Activated CD4-positive, alpha-beta memory T cell treated with anti-CD3 and anti-CD28 coated beads for 36 hours (primary cell): ENCODE measurements at regions of chr3 and their contacts with region 1.

Region 1: DNA sequence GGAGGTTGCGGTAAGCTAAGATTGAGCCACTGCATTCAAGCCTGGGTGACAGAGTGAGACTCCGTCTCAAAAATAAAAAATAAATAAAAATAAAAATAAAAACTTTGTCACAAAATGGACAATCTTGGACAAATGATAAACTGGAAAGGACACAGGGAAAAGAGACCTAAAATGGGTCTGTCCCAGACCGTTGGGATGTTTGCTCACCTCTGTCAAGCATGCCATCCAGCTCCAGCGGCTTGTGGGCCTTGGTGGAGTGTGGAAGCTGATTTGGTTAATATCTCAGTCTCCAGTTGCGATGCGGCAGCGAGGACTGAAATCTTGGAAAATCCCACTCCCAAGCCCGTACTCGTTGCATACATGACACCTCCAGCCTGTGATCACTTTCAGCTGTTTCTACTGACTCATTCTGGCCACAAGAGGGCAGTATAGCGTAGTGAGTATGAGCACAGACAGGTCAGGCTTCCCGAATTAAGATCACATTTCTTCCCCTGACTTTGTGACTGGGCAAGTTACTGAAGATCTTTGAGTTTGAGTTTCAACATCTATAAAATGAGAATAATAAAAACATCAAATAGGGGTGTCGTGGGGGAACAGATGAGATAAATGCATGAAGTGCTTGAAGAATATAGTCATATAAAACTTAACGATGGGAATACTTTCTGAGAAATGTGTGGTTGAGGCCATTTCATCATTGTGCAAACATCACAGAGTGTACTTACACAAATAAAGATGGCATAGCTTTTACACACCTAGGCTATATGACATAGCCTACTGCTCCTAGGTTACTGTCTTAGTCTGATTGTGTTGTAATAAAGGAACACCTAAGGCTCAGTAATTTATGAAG is 19.6 kb upstream of the MOBP start:
- DNase-seq: peak; percentile 59
- H3K4me3 Mint-ChIP-seq: no peak overlapping the region
- H3K27ac Mint-ChIP-seq: no peak overlapping the region
- H3K4me1 Mint-ChIP-seq: peaks cover 4% of the 10 kb centered on the region
- H3K27me3 Mint-ChIP-seq: peaks cover 2% of the 10 kb centered on the region

Region 2: GRCh38 chr3:39433642-39434041 is 14.2 kb before region 1 on chr3:
- CTCF ChIA-PET with region 1: interaction called, 10 read pairs
- POLR2A ChIA-PET with region 1: interaction called, 3 read pairs
- intact Hi-C with region 1: no loop called
- DNase-seq: no peak
- H3K4me3 Mint-ChIP-seq: no peak overlapping the region
- H3K27ac Mint-ChIP-seq: no peak overlapping the region
- H3K4me1 Mint-ChIP-seq: no peaks in the 10 kb centered on the region
- H3K27me3 Mint-ChIP-seq: peaks cover 6% of the 10 kb centered on the region

Region 3: DNA sequence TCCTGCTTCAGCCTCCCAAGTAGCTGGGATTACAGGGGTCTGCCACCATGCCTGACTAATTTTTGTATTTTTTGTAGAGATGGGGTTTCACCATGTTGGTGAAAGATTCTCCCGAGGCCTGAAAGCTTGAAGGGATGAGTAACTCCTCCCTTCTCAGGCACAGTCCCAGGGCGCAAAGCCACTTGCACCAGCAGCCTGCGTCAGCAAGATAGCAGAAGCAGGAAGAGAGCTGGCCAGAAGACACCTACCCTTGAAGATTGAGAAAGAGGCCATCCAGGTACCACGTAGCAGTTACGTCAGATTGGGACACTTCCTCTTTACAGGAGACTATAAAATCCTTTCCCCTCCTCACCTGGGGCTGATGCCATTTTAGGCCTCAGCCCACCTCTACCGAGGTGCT is 11.2 kb after region 1 on chr3:
- CTCF ChIA-PET with region 1: interaction called, 11 read pairs
- POLR2A ChIA-PET with region 1: no interaction called
- intact Hi-C with region 1: no loop called
- DNase-seq: no peak
- H3K4me3 Mint-ChIP-seq: no peak overlapping the region
- H3K27ac Mint-ChIP-seq: no peak overlapping the region
- H3K4me1 Mint-ChIP-seq: no peaks in the 10 kb centered on the region
- H3K27me3 Mint-ChIP-seq: peaks cover 9% of the 10 kb centered on the region

Region 4: DNA sequence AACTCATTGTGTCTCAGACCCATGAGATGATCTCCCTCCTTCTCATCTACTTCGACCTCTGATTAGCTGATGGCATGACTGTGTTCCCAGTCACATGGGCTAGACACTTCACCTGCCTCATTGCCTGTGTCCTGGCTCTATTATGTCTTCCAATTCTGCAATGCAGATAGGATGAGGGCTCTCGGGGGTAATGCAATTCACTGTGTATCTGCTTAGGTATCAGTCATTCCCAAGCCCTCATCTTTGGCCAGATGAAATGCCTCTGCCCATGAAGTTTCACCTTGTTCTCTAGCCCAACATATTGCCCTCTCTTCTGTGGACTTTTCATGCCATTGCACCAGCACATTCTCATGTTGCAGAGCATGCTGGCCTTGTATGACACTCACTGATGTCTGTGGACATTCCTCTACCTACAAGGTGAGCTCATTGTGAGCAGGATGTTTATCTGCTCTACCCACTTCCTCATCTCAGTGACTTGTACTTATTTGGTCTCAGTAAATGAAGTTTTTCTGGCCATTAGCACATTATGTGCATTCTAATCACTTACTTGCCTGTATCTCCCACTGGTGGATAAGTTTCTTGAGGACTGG is 51.9 kb after region 1 on chr3:
- CTCF ChIA-PET with region 1: interaction called, 45 read pairs
- POLR2A ChIA-PET with region 1: no interaction called
- intact Hi-C with region 1: loop called (anchors 1 kb)
- DNase-seq: no peak
- H3K4me3 Mint-ChIP-seq: no peak overlapping the region
- H3K27ac Mint-ChIP-seq: no peak overlapping the region
- H3K4me1 Mint-ChIP-seq: no peaks in the 10 kb centered on the region
- H3K27me3 Mint-ChIP-seq: peaks cover 29% of the 10 kb centered on the region

Region 5: DNA sequence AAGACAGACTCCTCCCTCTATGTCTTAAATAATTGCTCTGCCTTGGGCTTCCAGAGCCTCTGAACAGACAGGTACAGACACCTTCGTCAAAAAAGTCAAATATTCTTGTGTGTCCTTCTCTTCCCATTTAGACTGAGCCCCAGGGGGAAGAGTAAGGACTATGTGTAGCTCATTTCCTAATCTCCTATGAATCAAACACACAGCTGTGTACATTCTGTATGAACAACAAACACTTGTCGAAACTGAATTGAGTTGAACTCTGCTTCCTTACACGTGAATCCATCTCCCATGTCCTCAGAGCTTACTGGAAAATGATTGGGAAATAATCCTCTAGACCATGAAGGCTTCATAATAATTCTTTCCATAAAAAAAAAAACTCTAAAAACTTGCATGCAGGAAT is 100.4 kb after region 1 on chr3:
- CTCF ChIA-PET with region 1: no interaction called
- POLR2A ChIA-PET with region 1: no interaction called
- intact Hi-C with region 1: no loop called
- DNase-seq: no peak
- H3K4me3 Mint-ChIP-seq: no peak overlapping the region
- H3K27ac Mint-ChIP-seq: no peak overlapping the region
- H3K4me1 Mint-ChIP-seq: no peaks in the 10 kb centered on the region
- H3K27me3 Mint-ChIP-seq: peaks cover 20% of the 10 kb centered on the region

Region 6: GRCh38 chr3:40179016-40179415 is 731.2 kb after region 1 on chr3:
- CTCF ChIA-PET with region 1: interaction called, 16 read pairs
- POLR2A ChIA-PET with region 1: no interaction called
- intact Hi-C with region 1: loop called (anchors 2 kb)
- DNase-seq: peak; percentile 72
- H3K4me3 Mint-ChIP-seq: no peak overlapping the region
- H3K27ac Mint-ChIP-seq: no peak overlapping the region
- H3K4me1 Mint-ChIP-seq: no peaks in the 10 kb centered on the region
- H3K27me3 Mint-ChIP-seq: no peaks in the 10 kb centered on the region